Heart right ventricle (tissue), 16 donors: ENCODE measurements at regions of chr9 and their contacts with region 1.

Region 1: DNA sequence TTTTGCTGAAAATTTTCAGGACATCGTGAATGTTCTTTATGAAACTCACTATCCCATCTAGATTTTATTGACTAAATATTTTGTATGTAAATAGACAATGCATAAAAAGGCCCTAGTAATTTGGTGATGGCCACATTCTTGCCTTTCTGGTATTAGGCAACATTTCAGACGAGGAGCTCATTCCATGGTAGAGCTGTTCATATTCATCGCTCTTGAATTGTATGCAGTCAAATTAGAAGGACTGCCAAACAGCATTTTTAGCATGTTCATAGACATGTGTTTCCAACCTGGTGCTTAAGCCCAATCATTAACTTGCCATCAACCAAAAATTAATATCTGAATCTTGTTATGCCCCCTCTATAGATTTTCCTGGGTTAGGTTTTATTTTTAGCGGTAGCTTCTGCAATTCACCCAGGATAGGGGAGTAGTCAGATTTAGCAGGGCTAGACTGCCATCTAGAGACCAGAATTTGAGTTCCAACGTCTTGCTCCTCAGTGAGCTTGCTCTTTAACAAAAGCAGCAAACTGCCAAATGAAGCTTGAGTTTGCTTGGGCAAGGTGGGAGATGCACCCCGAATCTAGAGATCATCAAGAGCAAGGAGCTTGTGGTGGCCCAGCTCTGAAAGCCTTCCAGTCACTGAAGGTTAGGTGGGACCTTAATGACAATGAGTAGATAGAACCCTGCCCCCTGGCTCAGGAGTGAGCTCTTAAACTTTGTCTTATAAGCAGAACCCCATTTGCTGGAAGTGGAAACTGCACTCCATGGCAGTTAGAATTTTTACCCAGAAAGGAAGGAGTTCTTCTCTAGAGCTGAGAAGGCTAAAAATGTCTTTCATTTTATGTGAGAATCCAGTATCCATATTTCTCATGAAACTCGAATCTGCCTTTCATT is 456.2 kb downstream of the RASEF start:
- DNase-seq: peak in 1 of 2 donors; percentile 57
- ATAC-seq: peak in 7 of 8 donors; percentile 78 to 89 (median 83)
- H3K4me3 ChIP-seq: no peak overlapping the region
- H3K27ac ChIP-seq: no peak overlapping the region
- H3K4me1 ChIP-seq: peaks cover 0 to 26% (median 9%) of the 10 kb centered on the region in 9 donors
- H3K27me3 ChIP-seq: peaks cover 0 to 27% (median 5%) of the 10 kb centered on the region in 7 donors
- CTCF ChIP-seq: peak; percentile 32 to 80 (median 70)

Region 2: DNA sequence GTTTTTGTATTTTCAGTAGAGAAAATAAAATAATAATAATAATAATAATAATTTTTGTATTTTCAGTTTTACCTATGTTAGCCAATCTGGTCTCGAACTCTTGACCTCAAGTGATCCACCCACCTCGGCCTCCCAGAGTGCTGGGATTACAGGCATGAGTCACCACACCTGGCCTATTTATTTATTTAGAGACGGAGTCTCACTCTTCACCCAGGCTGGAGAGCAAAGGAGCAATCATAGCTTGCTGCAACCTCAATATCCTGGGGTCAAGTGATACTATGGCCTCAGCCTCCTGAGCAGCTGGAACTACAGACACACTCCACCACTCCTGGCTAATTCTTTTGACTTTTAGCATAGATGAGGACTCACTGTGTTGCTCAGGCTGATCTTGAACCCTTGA is 1084.8 kb before region 1 on chr9:
- intact Hi-C with region 1: loop called in 7 of 10 experiments (anchors 5 to 10 kb)
- DNase-seq: no peak
- ATAC-seq: no peak
- H3K4me3 ChIP-seq: no peak overlapping the region
- H3K27ac ChIP-seq: no peak overlapping the region
- H3K4me1 ChIP-seq: peaks cover 0 to 11% (median 0%) of the 10 kb centered on the region in 9 donors
- H3K27me3 ChIP-seq: no peaks in the 10 kb centered on the region
- CTCF ChIP-seq: no peak

Region 3: GRCh38 chr9:82488313-82489200 is 118.2 kb before region 1 on chr9:
- intact Hi-C with region 1: loop called in 1 of 10 experiments (anchors 10 kb)
- DNase-seq: peak in 1 of 2 donors; percentile 72
- ATAC-seq: peak; percentile 72 to 93 (median 90)
- H3K4me3 ChIP-seq: peak overlapping the region in 1 of 10 donors; percentile 14
- H3K27ac ChIP-seq: peak overlapping the region; percentile 51 to 89 (median 70)
- H3K4me1 ChIP-seq: peaks cover 9 to 35% (median 29%) of the 10 kb centered on the region in 9 donors
- H3K27me3 ChIP-seq: no peaks in the 10 kb centered on the region
- CTCF ChIP-seq: no peak

Region 4: GRCh38 chr9:82539856-82540579 is 66.7 kb before region 1 on chr9:
- intact Hi-C with region 1: loop called in 3 of 10 experiments (anchors 5 to 10 kb)
- DNase-seq: no peak
- ATAC-seq: no peak
- H3K4me3 ChIP-seq: no peak overlapping the region
- H3K27ac ChIP-seq: no peak overlapping the region
- H3K4me1 ChIP-seq: peaks cover 0 to 14% (median 0%) of the 10 kb centered on the region in 9 donors
- H3K27me3 ChIP-seq: no peaks in the 10 kb centered on the region
- CTCF ChIP-seq: no peak

Region 5: GRCh38 chr9:82961504-82962125 is 354.9 kb after region 1 on chr9:
- intact Hi-C with region 1: loop called in 1 of 10 experiments (anchors 10 kb)
- DNase-seq: peak; percentile 24 to 76
- ATAC-seq: peak; percentile 55 to 92 (median 83)
- H3K4me3 ChIP-seq: no peak overlapping the region
- H3K27ac ChIP-seq: no peak overlapping the region
- H3K4me1 ChIP-seq: no peaks in the 10 kb centered on the region
- H3K27me3 ChIP-seq: peaks cover 0 to 8% (median 0%) of the 10 kb centered on the region in 7 donors
- CTCF ChIP-seq: peak; percentile 42 to 88 (median 77)

Region 6: GRCh38 chr9:83106263-83106662 is 499.5 kb after region 1 on chr9:
- intact Hi-C with region 1: no loop called
- DNase-seq: no peak
- ATAC-seq: no peak
- H3K4me3 ChIP-seq: no peak overlapping the region
- H3K27ac ChIP-seq: no peak overlapping the region
- H3K4me1 ChIP-seq: no peaks in the 10 kb centered on the region
- H3K27me3 ChIP-seq: peaks cover 0 to 3% (median 0%) of the 10 kb centered on the region in 7 donors
- CTCF ChIP-seq: no peak